PC-9 (cell line): ENCODE measurements at regions of chr7 and their contacts with region 1.

Region 1: DNA sequence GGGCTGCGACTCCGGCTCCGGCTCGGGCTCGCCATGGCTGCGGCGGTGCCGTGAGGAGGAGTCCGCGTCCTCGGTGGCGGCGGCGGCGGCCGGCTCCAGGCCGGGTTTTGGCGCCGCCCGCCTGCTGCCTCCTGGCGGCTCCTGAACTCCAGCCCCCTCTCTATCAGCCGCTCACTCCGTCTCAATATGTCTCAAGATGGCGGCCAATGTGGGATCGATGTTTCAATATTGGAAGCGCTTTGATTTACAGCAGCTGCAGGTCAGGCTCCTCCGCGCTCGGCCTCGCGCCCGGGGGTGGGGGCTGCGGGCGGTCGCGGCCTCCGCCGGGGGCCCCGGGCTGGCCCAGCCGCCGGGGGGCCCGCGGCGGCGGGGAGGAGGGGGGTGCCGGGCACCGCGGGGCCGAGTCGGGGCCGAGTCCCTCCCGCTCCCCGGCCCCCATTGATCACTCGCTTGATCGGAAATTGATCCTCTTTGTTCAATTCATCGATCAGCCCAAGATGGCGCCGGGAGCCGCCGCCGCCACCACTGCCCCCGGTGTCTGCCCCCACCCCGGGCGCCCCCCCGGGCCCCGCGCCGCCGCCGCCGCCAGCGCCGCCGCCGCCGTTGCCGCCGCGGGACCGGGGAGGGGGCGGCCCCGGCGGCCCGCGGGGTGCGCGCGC is 1.5 kb upstream of the CUX1 start:
- DNase-seq: peak; percentile 61 to 76
- H3K4me3 ChIP-seq: peak overlapping the region; percentile 51; the same call in 1 of the 2 replicates
- H3K27ac ChIP-seq: no peak overlapping the region
- H3K4me1 ChIP-seq: peaks cover 15% of the 10 kb centered on the region
- H3K27me3 ChIP-seq: no peaks in the 10 kb centered on the region
- CTCF ChIP-seq: no peak

Region 2: DNA sequence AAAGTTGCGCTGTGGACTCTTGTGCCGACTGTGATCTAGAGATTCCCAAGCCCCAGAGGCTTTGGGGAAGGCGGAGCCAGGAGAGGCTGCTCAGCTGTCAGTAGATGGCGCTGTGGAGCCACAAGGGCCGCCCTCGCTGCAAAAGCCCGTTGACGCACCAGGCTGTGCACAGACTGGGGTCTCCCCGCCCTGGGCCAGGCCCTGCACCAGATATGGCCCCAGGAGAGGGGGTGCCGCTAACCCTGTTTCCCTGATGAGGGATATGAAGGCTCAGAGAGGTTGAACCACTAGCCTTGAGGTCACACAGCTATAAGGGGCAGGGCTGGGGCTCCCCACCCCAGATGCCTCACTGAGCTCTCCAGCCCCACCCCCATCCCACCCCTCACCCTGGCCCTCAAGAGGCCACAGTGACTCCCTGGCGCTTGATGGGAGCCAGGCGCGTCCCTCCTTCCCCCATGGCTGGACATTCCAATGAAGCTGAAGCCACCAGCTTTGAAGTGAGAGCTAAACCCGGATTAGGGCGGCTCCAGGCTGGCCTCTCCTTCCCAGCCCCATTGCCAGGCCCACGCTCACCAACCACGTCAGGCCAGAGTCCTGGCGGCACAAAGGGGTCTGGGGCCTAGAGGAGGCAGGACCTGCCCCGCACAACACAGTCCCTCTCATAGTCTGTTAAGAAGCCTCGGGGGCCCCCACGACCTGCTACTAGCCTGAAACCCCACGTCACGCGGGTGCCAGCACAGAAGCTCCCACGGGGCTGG is 213.3 kb before region 1 on chr7:
- CTCF ChIA-PET with region 1: interaction called, 4 read pairs
- POLR2A ChIA-PET with region 1: no interaction called
- intact Hi-C with region 1: loop called (anchors 1 kb)
- DNase-seq: peak; percentile 47 to 83
- H3K4me3 ChIP-seq: no peak overlapping the region
- H3K27ac ChIP-seq: no peak overlapping the region
- H3K4me1 ChIP-seq: no peaks in the 10 kb centered on the region; the same call in 1 of the 2 replicates
- H3K27me3 ChIP-seq: no peaks in the 10 kb centered on the region
- CTCF ChIP-seq: peak; percentile 93

Region 3: GRCh38 chr7:101743241-101743994 is 72.5 kb before region 1 on chr7:
- CTCF ChIA-PET with region 1: interaction called, 3 read pairs
- POLR2A ChIA-PET with region 1: no interaction called
- intact Hi-C with region 1: loop called (anchors 1 kb)
- DNase-seq: peak; percentile 52 to 66
- H3K4me3 ChIP-seq: peak overlapping the region; percentile 63
- H3K27ac ChIP-seq: no peak overlapping the region
- H3K4me1 ChIP-seq: peaks cover 28% of the 10 kb centered on the region
- H3K27me3 ChIP-seq: no peaks in the 10 kb centered on the region
- CTCF ChIP-seq: peak; percentile 51

Region 4: DNA sequence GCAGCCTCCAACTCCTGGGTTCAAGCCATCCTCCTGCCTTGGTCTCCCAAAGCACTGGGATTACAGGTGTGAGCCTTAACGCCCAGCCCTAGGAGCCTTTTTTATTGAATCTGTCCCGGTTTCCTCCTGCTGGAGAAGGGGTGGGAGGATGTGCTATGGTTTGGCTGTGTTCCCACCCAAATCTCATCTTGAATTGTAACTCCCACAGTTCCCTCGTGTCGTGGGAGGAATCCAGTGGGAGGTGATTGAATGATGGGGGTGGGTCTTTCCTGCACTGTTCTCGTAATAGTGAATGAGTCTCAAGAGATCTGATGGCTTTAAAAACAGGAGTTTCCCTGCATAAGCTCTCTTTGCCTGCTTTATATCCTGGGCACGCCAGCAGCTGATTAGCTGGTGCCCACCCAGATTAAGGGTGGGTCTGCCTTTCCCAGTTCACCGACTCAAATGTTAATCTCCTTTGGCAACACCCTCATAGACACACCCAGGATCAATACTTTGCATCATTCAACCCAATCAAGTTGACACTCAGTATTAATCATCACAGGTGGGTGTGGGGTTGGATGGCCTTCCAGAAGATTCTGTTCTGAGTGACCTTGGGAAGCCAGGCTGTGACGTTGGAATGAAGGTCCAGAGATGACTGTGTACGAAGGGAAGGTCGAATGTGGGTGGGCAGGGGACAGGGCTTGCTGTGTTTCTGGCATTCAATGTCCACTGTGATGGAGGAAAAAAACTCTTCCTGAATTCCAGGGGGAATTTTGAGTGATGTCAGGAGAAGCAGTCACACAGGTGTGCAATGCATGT is 32.4 kb before region 1 on chr7:
- CTCF ChIA-PET with region 1: no interaction called
- POLR2A ChIA-PET with region 1: no interaction called
- intact Hi-C with region 1: no loop called
- DNase-seq: no peak
- H3K4me3 ChIP-seq: no peak overlapping the region
- H3K27ac ChIP-seq: no peak overlapping the region
- H3K4me1 ChIP-seq: peaks cover 9% of the 10 kb centered on the region
- H3K27me3 ChIP-seq: no peaks in the 10 kb centered on the region
- CTCF ChIP-seq: no peak

Region 5: DNA sequence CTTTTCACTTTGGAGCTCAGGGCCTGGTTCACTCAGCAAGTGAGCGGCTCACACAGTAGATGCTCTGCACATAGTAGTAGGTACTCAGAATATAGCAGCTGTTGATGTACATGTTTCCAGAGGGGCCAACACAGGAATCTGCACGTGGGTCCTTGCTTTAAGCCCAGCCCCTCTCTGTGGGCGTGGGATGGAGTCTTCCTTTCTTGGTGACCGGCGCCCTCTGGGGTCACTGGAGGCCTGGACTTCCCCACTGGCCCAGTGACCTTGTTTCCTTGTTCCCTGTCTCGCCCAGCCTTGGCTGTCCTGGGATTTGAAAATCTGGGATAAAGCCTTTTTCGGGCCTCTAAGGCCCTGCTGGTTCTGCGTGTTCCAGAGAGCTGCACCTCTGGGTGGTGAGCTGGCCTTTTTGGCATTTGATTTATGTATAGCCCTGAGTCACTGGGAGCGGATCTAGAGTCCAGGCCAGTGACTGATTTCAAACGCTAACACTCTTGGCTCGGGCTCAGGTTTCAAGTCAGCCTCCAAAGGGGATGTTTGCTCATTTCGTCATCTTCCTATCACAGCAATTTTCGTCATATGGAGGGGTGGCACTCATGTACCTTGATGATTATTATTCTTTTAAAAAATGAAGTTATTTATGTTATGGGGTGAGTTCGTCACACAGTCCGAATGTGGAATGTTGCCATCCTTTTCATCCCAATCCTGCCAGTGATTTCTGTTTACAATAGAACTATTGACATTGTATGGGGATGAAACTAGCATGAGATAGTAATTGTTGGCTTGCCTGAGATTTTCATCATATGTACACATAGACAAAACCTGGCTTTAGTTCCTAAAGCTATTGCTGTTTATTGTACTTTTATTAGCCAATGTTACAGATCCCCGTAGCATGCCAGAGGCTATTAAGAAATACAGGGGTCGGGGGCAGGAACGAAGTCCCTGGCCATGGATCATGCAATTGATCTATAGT is 66.9 kb after region 1 on chr7:
- CTCF ChIA-PET with region 1: no interaction called
- POLR2A ChIA-PET with region 1: no interaction called
- intact Hi-C with region 1: loop called (anchors 2 kb)
- DNase-seq: peak; percentile 93 to 99
- H3K4me3 ChIP-seq: peak overlapping the region; percentile 39; the same call in 1 of the 2 replicates
- H3K27ac ChIP-seq: peak overlapping the region; percentile 99
- H3K4me1 ChIP-seq: peaks cover 53% of the 10 kb centered on the region
- H3K27me3 ChIP-seq: no peaks in the 10 kb centered on the region
- CTCF ChIP-seq: no peak

Region 6: GRCh38 chr7:101900103-101900502 is 84.1 kb after region 1 on chr7:
- CTCF ChIA-PET with region 1: no interaction called
- POLR2A ChIA-PET with region 1: no interaction called
- intact Hi-C with region 1: no loop called
- DNase-seq: no peak
- H3K4me3 ChIP-seq: no peak overlapping the region
- H3K27ac ChIP-seq: no peak overlapping the region
- H3K4me1 ChIP-seq: no peaks in the 10 kb centered on the region
- H3K27me3 ChIP-seq: no peaks in the 10 kb centered on the region
- CTCF ChIP-seq: no peak

Region 7: DNA sequence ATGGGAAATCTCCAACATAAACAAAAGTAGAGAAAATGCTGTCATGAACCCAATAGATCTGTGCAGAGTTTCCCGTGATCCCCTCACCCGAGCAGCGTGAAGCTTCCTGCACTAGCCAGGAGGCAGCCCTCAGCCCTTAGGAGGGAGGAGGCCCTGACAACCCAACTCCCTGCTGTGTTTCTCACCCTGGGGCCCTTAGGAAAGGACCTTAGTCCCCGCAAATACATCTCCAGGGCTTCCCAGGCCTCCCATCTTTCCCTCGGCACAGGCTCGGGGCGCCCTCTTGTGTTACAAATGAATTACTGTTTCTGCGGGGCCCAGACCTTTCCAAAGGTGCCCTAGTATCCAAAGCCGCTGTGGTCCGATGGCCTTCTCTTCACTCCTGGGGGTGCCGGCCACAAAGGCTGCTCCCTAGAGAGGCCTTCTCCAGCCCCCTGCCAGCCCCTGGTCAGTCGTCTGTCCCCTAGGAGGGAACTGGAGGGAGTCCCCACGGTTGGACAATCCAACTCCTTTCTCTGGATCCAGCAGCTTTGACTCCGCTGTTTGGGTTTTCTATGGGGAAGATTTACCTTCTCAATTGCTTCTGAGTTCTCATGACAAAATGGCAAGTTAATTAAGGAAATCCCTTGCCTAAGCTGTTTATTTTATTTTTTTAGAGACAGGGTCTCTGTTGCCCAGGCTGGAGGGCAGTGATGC is 420.8 kb after region 1 on chr7:
- CTCF ChIA-PET with region 1: no interaction called
- POLR2A ChIA-PET with region 1: no interaction called
- intact Hi-C with region 1: loop called (anchors 1 kb)
- DNase-seq: peak in 1 of 2 experiments; percentile 71
- H3K4me3 ChIP-seq: no peak overlapping the region
- H3K27ac ChIP-seq: no peak overlapping the region
- H3K4me1 ChIP-seq: no peaks in the 10 kb centered on the region
- H3K27me3 ChIP-seq: no peaks in the 10 kb centered on the region
- CTCF ChIP-seq: peak; percentile 90

Region 8: DNA sequence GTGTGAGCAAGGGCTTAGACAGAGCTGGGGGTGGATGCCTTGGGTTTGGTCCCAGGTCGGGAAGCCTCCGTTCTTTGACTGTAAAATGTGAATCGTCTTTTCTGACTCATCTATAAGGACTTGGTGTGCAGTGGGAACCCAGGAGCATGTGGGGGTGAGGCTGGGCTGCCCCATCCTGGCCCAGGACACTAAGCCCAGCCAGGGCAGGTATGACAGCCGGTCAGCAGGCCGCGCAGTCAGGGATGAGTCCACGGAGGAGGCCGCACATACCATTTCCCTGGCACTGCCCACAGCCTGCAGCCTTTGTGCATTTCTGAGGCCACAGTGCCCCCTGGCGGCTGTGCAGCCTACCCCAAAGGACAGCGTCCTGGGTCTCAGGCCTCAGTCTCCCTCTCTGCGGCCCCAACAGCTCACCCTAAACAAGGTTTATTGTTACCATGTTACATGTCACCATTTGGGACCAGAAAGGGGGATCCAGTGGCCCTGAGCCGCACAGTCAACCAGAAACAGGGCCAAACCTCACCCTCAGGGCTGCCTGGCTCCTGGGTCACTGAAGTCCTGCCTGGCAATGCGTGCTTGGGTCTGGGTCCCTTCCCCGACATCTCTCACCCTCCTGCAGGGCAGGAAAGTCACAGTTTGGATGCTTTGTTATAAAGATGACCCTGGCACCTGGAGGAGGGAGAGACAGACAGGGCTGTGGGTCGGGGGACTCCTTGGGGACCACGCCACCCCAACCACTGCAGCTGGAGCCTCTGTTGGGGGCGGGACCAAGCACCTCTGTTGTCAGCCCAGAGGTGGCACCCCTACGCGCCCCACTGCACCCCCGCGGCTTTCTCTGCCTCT is 456.3 kb after region 1 on chr7:
- CTCF ChIA-PET with region 1: no interaction called
- POLR2A ChIA-PET with region 1: no interaction called
- intact Hi-C with region 1: loop called (anchors 1 kb)
- DNase-seq: peak in 1 of 2 experiments; percentile 86
- H3K4me3 ChIP-seq: no peak overlapping the region
- H3K27ac ChIP-seq: no peak overlapping the region
- H3K4me1 ChIP-seq: no peaks in the 10 kb centered on the region
- H3K27me3 ChIP-seq: no peaks in the 10 kb centered on the region
- CTCF ChIP-seq: peak; percentile 86